ENCODE measurements at regions of chr16 and their contacts with region 1.

Region 1: GRCh38 chr16:75198135-75198600 is 8.8 kb downstream of the CTRB2 start:
- DNase-seq: no peak
- H3K4me3 ChIP-seq: no peak overlapping the region
- H3K27ac ChIP-seq: no peak overlapping the region
- H3K4me1 ChIP-seq: peaks cover 0 to 2% (median 0%) of the 10 kb centered on the region in 4 experiments; a peak in 3 of 7 replicates
- H3K27me3 ChIP-seq: no peaks in the 10 kb centered on the region
- CTCF ChIP-seq: no peak
- EP300 ChIP-seq: no peak
- POLR2A ChIP-seq: no peak
- RAD21 ChIP-seq: no peak

Region 2: DNA sequence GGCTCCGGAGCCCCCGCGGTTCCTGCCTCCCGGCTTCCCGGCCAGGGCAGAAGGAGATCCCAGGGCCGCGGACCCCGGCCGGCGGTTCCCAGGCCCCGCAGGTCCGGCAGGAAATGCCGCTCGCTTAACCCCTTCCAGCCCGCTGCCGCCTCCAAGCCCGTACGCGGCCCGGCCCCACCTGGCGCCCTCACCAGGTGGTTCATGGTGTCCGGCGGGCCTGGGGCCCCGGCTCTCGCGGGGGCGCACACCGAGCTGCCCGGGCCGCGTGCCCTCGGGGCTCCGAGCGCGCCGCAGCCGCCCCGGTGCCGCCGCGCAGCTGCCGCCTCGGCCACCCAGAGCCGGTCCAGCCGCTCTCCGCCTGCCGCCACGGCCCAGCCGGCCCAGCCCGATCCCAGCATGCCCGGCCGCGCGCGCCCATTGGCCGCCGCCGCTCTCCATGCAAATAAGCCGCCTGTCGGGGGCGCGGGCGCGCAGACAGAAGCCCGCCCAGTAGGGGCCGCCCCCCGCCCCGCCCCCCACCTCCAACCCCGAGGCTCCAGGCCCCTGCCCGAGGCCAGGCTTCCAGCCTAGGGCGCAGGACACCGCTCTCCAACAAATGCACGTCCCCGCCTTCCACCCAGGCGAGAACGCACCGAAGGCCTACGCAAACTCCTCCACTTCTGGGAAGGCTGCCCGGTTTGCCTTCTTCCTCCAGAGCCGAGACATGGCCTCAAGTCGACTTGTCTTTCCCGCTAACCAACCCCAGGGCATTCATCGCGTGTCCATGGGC is 53.3 kb after region 1 on chr16 and contains the start of gene BCAR1:
- CTCF ChIA-PET with region 1: interaction called, 16 read pairs
- POLR2A ChIA-PET with region 1: interaction called, 3 read pairs
- DNase-seq: peak; percentile 50 to 89
- H3K4me3 ChIP-seq: peak within 1 kb of the TSS; percentile 64 to 87 (median 68)
- H3K27ac ChIP-seq: peak within 1 kb of the TSS; percentile 84
- H3K4me1 ChIP-seq: peaks cover 13 to 76% (median 64%) of the 10 kb centered on the region in 4 experiments
- H3K27me3 ChIP-seq: no peaks in the 10 kb centered on the region; a peak in 1 of 7 replicates
- CTCF ChIP-seq: no peak
- EP300 ChIP-seq: no peak
- POLR2A ChIP-seq: no peak; a peak in 1 of 3 replicates
- RAD21 ChIP-seq: no peak
- total RNA-seq, gene BCAR1: 103 and 105 TPM in 2 replicates

Region 3: DNA sequence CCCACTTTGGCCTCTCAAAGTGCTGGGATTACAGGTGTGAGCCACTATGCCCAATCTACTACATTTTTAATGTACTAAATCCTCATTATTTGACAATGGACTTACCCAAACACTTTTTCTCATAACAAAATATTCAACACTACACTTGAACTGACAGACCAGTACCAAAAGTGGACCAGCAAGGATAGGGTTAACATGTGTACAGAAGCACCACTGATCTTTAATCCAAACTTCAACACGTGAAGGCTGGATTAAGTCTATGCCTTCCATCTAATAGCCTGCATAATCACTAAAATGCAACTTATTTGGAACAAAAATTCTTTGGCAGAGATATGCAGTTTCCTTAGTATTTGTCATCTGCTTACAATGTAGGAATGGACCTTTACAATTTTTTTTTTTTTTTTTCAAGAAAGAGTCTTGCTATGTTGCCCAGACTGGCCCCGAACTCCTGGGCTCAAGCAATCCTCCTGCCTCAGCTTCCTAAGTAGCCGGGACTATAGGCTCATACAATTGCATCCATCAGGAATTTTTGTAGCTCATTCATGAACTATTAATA is 113.3 kb after region 1 on chr16:
- CTCF ChIA-PET with region 1: interaction called, 18 read pairs
- POLR2A ChIA-PET with region 1: no interaction called
- DNase-seq: no peak
- H3K4me3 ChIP-seq: no peak overlapping the region
- H3K27ac ChIP-seq: no peak overlapping the region
- H3K4me1 ChIP-seq: no peaks in the 10 kb centered on the region; a peak in 1 of 7 replicates
- H3K27me3 ChIP-seq: no peaks in the 10 kb centered on the region
- CTCF ChIP-seq: no peak
- EP300 ChIP-seq: no peak
- POLR2A ChIP-seq: no peak
- RAD21 ChIP-seq: no peak

Region 4: DNA sequence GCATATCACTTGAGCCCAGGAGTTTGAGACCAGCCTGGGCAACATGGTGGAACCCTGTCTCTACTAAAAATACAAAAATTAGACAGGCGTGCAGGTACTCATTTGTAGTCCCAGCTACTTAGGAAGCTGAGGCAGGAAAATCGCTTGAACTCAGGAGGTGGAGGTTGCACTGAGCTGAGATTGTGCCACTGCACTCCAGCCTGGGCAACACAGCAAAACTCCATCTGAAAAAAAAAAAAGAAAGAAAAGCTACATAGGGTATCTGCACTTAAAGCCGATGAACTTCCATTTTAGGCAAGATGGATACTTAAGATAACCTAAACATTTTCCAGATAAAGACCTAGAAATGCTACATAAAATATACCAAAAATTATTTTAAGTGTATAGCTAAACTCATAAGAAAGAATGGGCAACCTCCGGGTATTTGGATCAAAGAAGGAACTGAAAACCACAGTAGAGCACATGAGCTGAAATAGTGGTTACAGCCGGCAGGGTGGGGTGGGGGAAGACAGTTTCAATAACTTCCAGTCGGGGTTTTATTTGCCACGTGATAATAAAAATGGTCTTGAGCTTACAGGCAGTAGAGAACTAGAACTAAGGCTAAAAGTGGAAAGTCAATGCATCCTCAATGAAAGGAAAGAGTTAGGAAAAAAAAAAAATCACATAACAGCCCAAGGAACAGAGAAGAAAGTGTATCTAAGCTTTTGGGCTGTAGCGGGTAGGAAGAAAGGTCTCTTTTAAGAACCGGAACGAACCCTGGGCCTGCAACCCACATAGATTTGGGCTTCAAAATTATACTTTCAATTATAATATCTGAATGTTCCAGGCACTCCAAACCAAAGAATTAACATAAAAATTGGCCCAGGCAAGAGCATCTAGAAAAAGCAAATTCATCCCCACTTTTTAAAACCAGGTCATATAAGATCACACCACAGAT is 182.0 kb after region 1 on chr16:
- CTCF ChIA-PET with region 1: interaction called, 11 read pairs
- POLR2A ChIA-PET with region 1: no interaction called
- DNase-seq: no peak
- H3K4me3 ChIP-seq: no peak overlapping the region
- H3K27ac ChIP-seq: no peak overlapping the region
- H3K4me1 ChIP-seq: peaks cover 0 to 4% (median 2%) of the 10 kb centered on the region in 4 experiments; a peak in 1 of 7 replicates
- H3K27me3 ChIP-seq: no peaks in the 10 kb centered on the region
- CTCF ChIP-seq: no peak
- EP300 ChIP-seq: no peak
- POLR2A ChIP-seq: no peak
- RAD21 ChIP-seq: no peak

Region 5: GRCh38 chr16:75392911-75393310 is 194.7 kb after region 1 on chr16:
- CTCF ChIA-PET with region 1: interaction called, 11 read pairs
- POLR2A ChIA-PET with region 1: no interaction called
- DNase-seq: no peak
- H3K4me3 ChIP-seq: no peak overlapping the region
- H3K27ac ChIP-seq: no peak overlapping the region
- H3K4me1 ChIP-seq: no peaks in the 10 kb centered on the region
- H3K27me3 ChIP-seq: no peaks in the 10 kb centered on the region
- CTCF ChIP-seq: no peak
- EP300 ChIP-seq: no peak
- POLR2A ChIP-seq: no peak
- RAD21 ChIP-seq: no peak